ENCODE measurements at regions of chr19 and their contacts with region 1.

Region 1: GRCh38 chr19:58326914-58327726 is at the start of gene ZSCAN22:
- DNase-seq: peak; percentile 88
- H3K4me3 Mint-ChIP-seq: no peak within 1 kb of the TSS
- H3K27ac Mint-ChIP-seq: no peak within 1 kb of the TSS
- H3K4me1 Mint-ChIP-seq: peaks cover 9% of the 10 kb centered on the region
- H3K27me3 Mint-ChIP-seq: no peaks in the 10 kb centered on the region
- total RNA-seq, gene ZSCAN22: 4.7 and 4.8 TPM in 2 replicates

Region 2: DNA sequence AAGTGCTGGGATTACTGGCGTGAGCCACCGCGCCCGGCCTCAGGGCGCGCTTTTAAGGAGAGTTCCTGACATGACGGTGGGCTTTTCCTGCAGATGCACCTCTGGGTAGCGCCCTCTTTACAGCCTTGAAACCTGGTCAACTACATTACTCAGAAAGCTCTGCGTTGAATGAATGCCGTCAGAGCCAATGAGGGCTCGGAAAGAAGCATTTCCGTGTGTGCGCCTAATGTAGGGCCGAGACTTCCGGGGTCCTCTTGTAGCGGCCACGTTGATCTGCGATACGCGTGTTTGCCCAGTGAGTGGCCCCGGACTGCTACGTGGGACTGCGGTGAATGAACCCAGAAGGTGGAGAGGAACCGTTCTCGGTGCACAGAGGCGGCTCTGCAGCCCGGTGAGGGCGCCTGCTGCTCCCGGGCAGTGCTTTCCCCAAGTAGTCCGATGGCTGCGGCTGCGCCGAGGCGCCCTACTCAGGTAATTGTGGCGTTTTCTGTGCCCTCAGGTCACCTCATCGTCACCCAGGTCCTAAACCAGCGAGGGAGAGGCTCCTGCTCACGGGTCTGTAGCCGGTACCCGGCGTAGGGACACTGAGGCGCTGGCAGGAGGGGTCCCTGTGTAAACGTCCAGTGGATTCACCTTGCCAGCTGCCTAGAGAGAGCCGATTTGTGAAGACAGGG is 507.5 kb before region 1 on chr19:
- intact Hi-C with region 1: loop called (anchors 10 kb)
- DNase-seq: peak; percentile 76
- H3K4me3 Mint-ChIP-seq: peak overlapping the region; percentile 99
- H3K27ac Mint-ChIP-seq: peak overlapping the region; percentile 98
- H3K4me1 Mint-ChIP-seq: peaks cover 50% of the 10 kb centered on the region
- H3K27me3 Mint-ChIP-seq: no peaks in the 10 kb centered on the region

Region 3: GRCh38 chr19:58278157-58279041 is 48.7 kb before region 1 on chr19 and contains the start of gene ZNF8:
- intact Hi-C with region 1: loop called (anchors 1 kb)
- DNase-seq: peak; percentile 97
- H3K4me3 Mint-ChIP-seq: peak within 1 kb of the TSS; percentile 92
- H3K27ac Mint-ChIP-seq: peak within 1 kb of the TSS; percentile 93
- H3K4me1 Mint-ChIP-seq: peaks cover 23% of the 10 kb centered on the region
- H3K27me3 Mint-ChIP-seq: no peaks in the 10 kb centered on the region
- total RNA-seq, gene ZNF8: 4.0 and 4.4 TPM in 2 replicates

Region 4: DNA sequence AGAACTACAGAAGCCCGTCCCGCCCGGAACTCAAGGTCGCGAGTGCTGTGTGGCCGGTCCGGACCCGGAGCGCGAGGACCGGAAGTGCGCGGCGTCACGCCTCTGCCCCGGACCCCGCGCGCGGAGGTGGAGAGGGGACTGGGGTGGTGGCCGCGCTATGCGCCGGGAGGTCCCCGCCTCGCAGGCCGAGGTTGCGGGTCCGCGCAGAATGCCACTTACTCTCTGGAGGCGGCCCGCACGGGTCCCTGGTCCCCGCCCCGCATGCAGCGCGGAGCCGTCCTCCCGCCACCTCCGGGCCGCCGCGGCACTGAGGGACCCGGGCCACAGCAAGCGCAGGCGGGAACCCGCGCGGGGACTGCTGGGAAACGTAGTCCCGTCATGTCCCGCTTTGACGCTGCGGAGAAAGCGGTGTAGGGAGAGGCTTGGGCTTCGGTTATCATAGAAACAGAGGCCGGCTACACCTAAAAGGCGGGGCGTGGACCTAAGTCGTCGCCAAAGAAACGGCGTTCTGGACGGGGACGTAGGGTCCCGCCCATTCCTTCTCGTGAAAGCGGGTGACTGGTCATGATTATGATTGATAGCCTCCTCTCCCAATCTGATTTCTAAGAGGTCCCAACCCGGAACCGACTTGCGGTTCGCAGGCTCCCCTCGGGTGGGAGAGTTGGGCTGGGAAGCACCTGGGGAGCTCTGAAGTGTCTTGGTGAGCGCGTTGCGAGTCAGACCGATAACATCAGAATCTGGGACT is 53.8 kb after region 1 on chr19 and contains the start of gene ZNF837:
- intact Hi-C with region 1: loop called (anchors 1 kb)
- DNase-seq: peak; percentile 98
- H3K4me3 Mint-ChIP-seq: peak within 1 kb of the TSS; percentile 87
- H3K27ac Mint-ChIP-seq: peak within 1 kb of the TSS; percentile 89
- H3K4me1 Mint-ChIP-seq: peaks cover 22% of the 10 kb centered on the region
- H3K27me3 Mint-ChIP-seq: no peaks in the 10 kb centered on the region
- total RNA-seq, gene ZNF837: 0.86 and 1.4 TPM in 2 replicates

Region 5: DNA sequence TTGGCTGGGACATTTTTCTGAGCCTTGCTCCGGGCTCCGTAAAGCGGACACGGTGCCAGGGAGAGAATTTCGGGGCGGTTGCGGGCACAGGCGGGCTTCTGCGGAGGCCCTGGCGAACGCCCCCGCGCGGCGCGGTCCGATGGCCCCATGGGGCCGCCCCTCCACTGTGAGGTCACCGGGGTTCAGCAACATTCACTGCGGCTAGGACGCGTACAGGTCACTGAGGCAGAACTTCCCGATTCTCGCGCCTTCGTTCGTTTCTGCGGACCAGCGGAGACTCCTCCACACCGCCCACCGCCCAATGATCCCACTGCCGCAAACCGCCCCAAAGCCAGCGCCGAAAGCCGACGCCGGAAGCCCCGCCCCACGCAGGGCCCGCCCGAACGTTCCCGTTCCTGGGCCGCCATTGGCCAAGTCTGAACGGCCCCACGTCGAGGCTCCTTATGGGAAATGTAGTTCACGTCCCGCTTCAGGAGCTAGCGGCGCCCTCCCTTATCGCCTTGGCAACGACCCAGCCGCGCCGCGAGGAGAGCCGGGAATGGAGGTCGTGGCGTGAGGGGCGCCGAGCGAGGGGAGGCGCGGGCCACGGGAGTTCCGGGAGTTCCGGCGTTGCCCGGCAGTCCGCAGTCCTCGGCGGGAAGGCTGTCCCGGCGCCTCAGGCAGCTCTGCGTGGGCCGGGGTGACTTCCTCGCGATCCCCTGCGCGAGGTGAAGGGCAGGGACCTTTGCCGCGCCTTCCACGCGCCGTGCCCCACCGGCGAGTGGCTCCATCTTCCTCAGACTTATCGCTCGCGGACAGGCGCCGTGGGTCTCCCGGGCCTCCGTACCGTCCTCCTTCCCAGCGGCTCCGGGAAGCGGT is 81.3 kb after region 1 on chr19 and contains the start of gene ZNF584:
- intact Hi-C with region 1: loop called (anchors 1 kb)
- DNase-seq: peak; percentile 90
- H3K4me3 Mint-ChIP-seq: peak within 1 kb of the TSS; percentile 84
- H3K27ac Mint-ChIP-seq: peak within 1 kb of the TSS; percentile 98
- H3K4me1 Mint-ChIP-seq: peaks cover 35% of the 10 kb centered on the region
- H3K27me3 Mint-ChIP-seq: no peaks in the 10 kb centered on the region
- total RNA-seq, gene ZNF584: 17.8 and 20.6 TPM in 2 replicates

Region 6: DNA sequence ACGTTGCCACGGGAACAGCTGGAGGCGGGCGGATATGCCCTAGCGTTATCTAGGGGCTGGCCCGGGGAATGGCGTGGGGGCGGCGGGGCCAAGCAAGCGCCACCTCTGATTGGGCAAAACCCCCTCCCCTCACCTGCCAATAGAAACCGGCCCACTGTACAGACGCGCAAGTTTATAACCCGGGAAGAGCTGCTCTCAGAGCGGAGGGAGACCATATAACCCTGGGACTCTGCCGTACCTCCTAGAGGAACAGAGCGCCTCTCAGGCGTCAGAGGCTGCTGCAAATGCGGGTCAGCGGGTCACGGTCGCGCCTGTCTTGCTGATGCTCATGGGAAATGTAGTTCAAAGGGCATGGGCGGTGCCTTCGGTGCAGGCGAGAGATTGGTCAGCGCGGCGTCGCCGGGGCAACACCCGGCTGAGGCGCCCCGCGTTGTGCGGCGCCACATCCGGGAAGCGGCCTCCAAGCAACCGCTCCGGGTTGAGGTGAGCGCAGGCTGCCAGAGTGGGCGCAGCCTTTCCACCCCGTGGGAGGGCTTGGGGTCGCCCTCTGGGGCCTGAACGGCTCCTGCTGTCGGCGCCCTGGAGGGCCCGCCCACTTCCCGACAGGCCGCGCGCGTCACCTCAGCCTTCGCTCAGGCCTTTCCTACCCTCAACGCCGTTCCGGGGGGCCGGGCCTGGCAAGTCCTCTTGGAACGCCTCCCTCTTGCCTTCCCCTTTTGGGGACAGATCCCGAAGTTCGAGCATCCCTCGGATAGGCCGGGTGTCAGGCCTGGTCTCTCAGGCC is 148.8 kb after region 1 on chr19 and contains the start of gene ZNF446:
- intact Hi-C with region 1: loop called (anchors 2 kb)
- DNase-seq: peak; percentile 95
- H3K4me3 Mint-ChIP-seq: peak within 1 kb of the TSS; percentile 88
- H3K27ac Mint-ChIP-seq: peak within 1 kb of the TSS; percentile 99
- H3K4me1 Mint-ChIP-seq: peaks cover 25% of the 10 kb centered on the region
- H3K27me3 Mint-ChIP-seq: no peaks in the 10 kb centered on the region
- total RNA-seq, gene ZNF446: 6.6 and 6.7 TPM in 2 replicates